T-cell (primary cell): ENCODE measurements at regions of chr9 and their contacts with region 1.

Region 1: DNA sequence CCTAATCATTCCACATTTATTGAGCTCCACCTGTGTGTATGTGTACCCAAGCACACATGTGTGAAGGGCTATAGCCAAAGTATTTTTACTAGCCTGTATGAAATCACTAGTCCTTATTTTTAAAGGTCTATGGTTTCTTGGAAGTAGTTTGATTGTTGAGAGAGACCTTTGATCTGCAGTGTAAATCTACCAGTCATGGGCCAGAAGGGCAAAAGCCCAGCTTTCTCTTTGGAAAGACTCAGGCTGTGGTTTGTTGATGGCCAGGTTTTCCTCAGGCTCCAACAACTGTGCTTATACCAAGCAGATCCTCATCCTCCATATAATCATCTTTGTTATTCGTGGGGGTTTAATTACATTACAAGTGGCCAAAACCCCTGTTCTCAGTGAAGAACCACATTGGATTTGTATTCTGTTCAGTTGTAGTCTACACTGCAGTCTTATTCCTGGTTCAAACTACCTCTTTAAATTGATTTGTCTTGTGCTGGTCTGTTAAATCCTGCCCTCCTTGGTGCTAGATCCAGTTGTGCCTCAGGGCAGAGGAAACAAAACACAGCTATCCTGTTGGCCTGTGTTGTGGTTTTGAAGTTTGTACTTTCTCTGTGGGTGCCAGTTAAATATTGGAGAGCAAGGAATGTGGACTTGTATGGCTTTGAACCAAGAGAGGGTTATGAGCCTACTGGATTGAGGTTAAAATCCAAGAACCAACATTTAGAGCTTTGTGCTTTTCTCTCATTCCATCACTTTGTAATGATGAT is 13.3 kb downstream of the CDC26 start:
- DNase-seq: no peak
- ATAC-seq: no peak
- H3K4me3 ChIP-seq: no peak overlapping the region
- H3K4me3 Mint-ChIP-seq: no peak overlapping the region
- H3K27ac ChIP-seq: no peak overlapping the region
- H3K27ac Mint-ChIP-seq: no peak overlapping the region
- H3K4me1 ChIP-seq: no peaks in the 10 kb centered on the region
- H3K4me1 Mint-ChIP-seq: no peaks in the 10 kb centered on the region
- H3K27me3 ChIP-seq: no peaks in the 10 kb centered on the region
- H3K27me3 Mint-ChIP-seq: no peaks in the 10 kb centered on the region

Region 2: GRCh38 chr9:111632695-111633388 is 1629.3 kb before region 1 on chr9:
- CTCF ChIA-PET with region 1: no interaction called
- POLR2A ChIA-PET with region 1: no interaction called
- DNase-seq: no peak
- ATAC-seq: no peak
- H3K4me3 ChIP-seq: no peak overlapping the region
- H3K4me3 Mint-ChIP-seq: peak overlapping the region; percentile 80 to 86 (median 81)
- H3K27ac ChIP-seq: no peak overlapping the region
- H3K27ac Mint-ChIP-seq: no peak overlapping the region
- H3K4me1 ChIP-seq: peaks cover 16 to 19% of the 10 kb centered on the region in 2 experiments
- H3K4me1 Mint-ChIP-seq: peaks cover 44 to 51% (median 50%) of the 10 kb centered on the region in 3 donors
- H3K27me3 ChIP-seq: no peaks in the 10 kb centered on the region
- H3K27me3 Mint-ChIP-seq: no peaks in the 10 kb centered on the region

Region 3: DNA sequence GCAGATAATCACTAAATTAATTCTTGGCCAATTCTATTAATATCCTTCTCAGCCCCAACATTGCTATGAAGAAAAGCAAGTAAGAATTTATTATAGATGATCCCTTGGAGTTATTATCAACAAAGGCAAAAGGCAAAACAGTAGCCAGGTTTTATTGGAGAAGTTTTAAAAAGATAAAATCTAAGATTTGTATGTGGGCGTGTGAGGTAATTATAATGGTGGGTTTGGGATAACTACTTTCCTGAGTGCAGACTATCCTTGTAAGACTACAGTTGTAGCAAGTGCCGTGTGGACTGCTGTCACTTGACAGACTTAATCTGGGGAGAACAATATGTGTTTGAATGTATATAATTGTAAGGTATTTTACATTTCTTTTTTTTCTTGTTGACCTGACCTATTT is 17.5 kb before region 1 on chr9:
- CTCF ChIA-PET with region 1: no interaction called
- POLR2A ChIA-PET with region 1: interaction called in 1 of 2 experiments, 11 read pairs
- DNase-seq: no peak
- ATAC-seq: no peak
- H3K4me3 ChIP-seq: no peak overlapping the region
- H3K4me3 Mint-ChIP-seq: no peak overlapping the region
- H3K27ac ChIP-seq: no peak overlapping the region
- H3K27ac Mint-ChIP-seq: no peak overlapping the region
- H3K4me1 ChIP-seq: no peaks in the 10 kb centered on the region
- H3K4me1 Mint-ChIP-seq: no peaks in the 10 kb centered on the region
- H3K27me3 ChIP-seq: no peaks in the 10 kb centered on the region
- H3K27me3 Mint-ChIP-seq: no peaks in the 10 kb centered on the region

Region 4: DNA sequence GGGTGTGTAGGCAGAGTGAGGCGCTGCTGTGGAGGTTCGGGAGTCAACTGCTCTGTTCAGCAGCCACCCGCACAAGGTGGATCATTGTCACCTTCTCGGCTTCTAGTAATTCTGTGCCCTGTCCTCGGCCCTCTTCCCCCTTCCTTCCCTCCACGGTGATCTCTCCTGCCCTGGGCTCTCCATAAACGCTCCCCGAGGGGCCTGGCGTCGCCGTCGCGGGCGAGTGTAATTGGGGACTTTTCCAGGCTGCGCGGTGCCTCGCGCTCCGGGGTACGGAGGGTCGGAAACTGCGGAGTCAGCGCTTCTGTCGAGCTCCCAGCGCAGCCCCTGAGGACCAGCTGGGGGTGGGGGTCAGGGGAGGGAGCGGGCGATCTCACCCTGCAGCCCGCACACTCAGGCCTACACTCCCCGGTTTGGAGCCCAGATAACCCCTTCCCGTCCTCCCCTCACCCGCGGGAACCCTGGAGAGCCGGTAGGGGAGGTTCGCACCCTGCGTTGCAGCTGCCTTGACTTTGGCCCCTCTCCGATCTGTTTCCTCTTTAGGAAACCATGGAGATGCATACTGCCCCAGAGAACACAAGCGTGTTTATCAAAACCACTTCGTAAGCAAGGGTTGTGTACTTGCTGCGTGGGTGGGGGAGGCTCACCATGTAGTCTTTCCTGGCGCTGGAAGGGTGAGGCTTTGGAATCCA is 425.7 kb after region 1 on chr9:
- CTCF ChIA-PET with region 1: no interaction called
- POLR2A ChIA-PET with region 1: no interaction called
- DNase-seq: no peak
- ATAC-seq: no peak
- H3K4me3 ChIP-seq: no peak overlapping the region
- H3K4me3 Mint-ChIP-seq: no peak overlapping the region
- H3K27ac ChIP-seq: no peak overlapping the region
- H3K27ac Mint-ChIP-seq: no peak overlapping the region
- H3K4me1 ChIP-seq: peaks cover 0 to 12% of the 10 kb centered on the region in 2 experiments
- H3K4me1 Mint-ChIP-seq: peaks cover 0 to 10% (median 7%) of the 10 kb centered on the region in 3 donors
- H3K27me3 ChIP-seq: peaks cover 7 to 37% of the 10 kb centered on the region in 2 experiments
- H3K27me3 Mint-ChIP-seq: peaks cover 50 to 68% of the 10 kb centered on the region in 2 donors